Activated CD8-positive, alpha-beta T cell treated with anti-CD3 and anti-CD28 coated beads, Interleukin-2, amount 10 ng/mL, durations not matched to agents 7 days and 5 days (primary cell): ENCODE measurements at regions of chr15 and their contacts with region 1.

Region 1: GRCh38 chr15:90571063-90571541 is 41.4 kb downstream of the CRTC3 start:
- DNase-seq: peak; percentile 31
- ATAC-seq: peak; percentile 14
- H3K4me3 Mint-ChIP-seq: peak overlapping the region; percentile 46
- H3K27ac Mint-ChIP-seq: peak overlapping the region; percentile 70
- H3K4me1 Mint-ChIP-seq: peaks cover 90% of the 10 kb centered on the region
- H3K27me3 Mint-ChIP-seq: no peaks in the 10 kb centered on the region

Region 2: GRCh38 chr15:90557186-90558084 is 13.7 kb before region 1 on chr15:
- CTCF ChIA-PET with region 1: interaction called, 12 read pairs
- POLR2A ChIA-PET with region 1: interaction called, 3 read pairs
- DNase-seq: no peak
- ATAC-seq: peak; percentile 28
- H3K4me3 Mint-ChIP-seq: peak overlapping the region; percentile 30
- H3K27ac Mint-ChIP-seq: peak overlapping the region; percentile 53
- H3K4me1 Mint-ChIP-seq: peaks cover 60% of the 10 kb centered on the region
- H3K27me3 Mint-ChIP-seq: no peaks in the 10 kb centered on the region

Region 3: GRCh38 chr15:90716976-90717821 is 146.1 kb after region 1 on chr15 and contains the start of gene BLM:
- CTCF ChIA-PET with region 1: no interaction called
- POLR2A ChIA-PET with region 1: no interaction called
- DNase-seq: peak; percentile 97
- ATAC-seq: peak; percentile 99
- H3K4me3 Mint-ChIP-seq: peak within 1 kb of the TSS; percentile 81
- H3K27ac Mint-ChIP-seq: peak within 1 kb of the TSS; percentile 94
- H3K4me1 Mint-ChIP-seq: peaks cover 25% of the 10 kb centered on the region
- H3K27me3 Mint-ChIP-seq: no peaks in the 10 kb centered on the region
- total RNA-seq, gene BLM: 52.3 to 57.4 TPM